ENCODE measurements at regions of chr17 and their contacts with region 1.

Region 1: DNA sequence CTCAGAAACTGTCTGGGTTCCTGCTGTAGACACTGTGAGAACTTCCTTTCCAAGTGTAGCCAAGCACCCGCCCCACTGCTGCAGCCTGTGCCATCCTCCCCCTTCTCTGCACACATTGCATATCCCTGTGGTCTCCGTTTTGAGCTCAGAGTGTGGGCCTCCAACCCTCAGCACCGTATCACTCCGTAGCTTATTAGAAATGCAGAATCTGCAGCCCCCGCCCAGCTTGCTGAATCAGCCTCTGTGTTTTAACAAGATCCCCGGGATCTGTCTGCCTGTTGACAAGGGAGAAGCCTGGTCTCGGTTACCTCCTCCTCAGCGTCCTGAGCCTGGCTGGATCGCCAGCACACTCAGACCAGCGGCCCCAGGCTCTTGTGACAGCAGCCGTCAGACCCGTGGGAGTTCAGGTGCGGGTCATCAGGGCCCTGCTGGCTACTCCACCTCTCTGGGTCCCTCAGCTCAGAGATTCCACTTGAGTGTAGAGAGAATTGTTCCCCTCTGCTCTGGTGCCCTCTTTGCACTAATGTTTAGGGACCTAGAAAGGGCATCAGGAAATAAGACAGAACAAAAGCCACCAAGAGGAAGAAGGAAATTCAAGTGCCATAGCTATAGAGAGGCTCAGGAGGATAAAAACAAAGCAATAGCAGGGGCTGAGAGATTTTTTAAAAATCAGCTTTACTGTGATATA is 92.3 kb downstream of the PITPNC1 start:
- DNase-seq: no peak
- H3K4me3 ChIP-seq: no peak overlapping the region
- H3K27ac ChIP-seq: no peak overlapping the region
- H3K4me1 ChIP-seq: no peaks in the 10 kb centered on the region
- H3K27me3 ChIP-seq: no peaks in the 10 kb centered on the region
- CTCF ChIP-seq: no peak

Region 2: DNA sequence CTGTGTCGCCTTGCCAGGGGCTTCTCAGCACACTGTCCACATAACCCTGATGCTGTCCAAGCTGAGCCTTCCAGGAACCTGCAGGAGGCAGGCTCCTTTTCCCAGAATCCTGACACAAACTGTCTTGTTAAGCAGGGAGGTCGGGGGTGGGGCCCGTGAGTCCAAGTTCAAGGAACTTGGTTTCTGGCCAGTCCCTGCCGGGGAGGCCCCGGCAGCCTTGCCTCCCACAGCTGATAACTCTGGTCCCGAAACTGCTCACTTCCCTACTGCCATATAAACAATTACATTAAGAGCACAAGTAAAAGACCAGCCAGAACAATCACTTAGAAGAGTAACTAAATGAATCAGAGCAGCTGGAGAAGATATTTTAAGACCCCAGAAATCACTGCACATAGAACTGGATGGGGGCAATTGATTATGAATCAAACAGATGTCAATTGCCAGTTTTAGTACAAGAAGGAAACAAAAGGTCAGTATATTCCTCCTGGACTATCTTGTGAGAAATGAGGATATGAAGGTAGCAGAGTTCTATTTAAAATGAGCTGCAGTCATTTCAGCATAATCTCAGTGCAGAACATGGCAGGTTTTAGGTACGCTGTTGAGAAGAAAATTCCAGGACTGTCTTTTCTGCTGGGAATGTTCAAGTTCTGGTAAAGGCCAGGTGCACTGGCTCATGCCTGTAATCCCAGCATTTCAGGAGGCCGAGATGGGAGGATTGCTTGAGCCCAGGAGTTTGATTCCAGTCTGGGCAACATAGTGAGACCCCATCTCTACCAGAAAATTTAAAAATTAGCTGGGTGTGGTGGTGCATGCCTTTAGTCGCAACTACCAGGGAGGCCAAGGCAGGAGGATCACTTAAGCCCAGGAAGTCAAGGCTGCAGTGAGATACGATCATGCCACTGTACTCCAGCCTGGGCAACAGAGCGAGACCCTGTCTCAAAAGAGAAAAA is 77.5 kb after region 1 on chr17:
- CTCF ChIA-PET with region 1: no interaction called
- dilution Hi-C with region 1: loop called (anchors 10 kb)
- in situ Hi-C with region 1: no loop called
- intact Hi-C with region 1: no loop called
- DNase-seq: no peak
- H3K4me3 ChIP-seq: no peak overlapping the region
- H3K27ac ChIP-seq: no peak overlapping the region
- H3K4me1 ChIP-seq: no peaks in the 10 kb centered on the region
- H3K27me3 ChIP-seq: no peaks in the 10 kb centered on the region
- CTCF ChIP-seq: no peak